Activated CD8-positive, alpha-beta T cell treated with anti-CD3 and anti-CD28 coated beads, Interleukin-2, amount 10 ng/mL, durations not matched to agents 7 days and 5 days (primary cell): ENCODE measurements at regions of chr1 and their contacts with region 1.

Region 1: GRCh38 chr1:45303582-45304310 is 22.9 kb upstream of the HPDL start:
- DNase-seq: peak; percentile 99
- ATAC-seq: peak; percentile 89
- H3K4me3 Mint-ChIP-seq: peak overlapping the region; percentile 89
- H3K27ac Mint-ChIP-seq: peak overlapping the region; percentile 97
- H3K4me1 Mint-ChIP-seq: peaks cover 40% of the 10 kb centered on the region
- H3K27me3 Mint-ChIP-seq: no peaks in the 10 kb centered on the region

Region 2: GRCh38 chr1:45033356-45033755 is 270.4 kb before region 1 on chr1:
- CTCF ChIA-PET with region 1: interaction called, 13 read pairs
- POLR2A ChIA-PET with region 1: interaction called, 3 read pairs
- DNase-seq: no peak
- ATAC-seq: peak; percentile 91
- H3K4me3 Mint-ChIP-seq: no peak overlapping the region
- H3K27ac Mint-ChIP-seq: peak overlapping the region; percentile 83
- H3K4me1 Mint-ChIP-seq: peaks cover 13% of the 10 kb centered on the region
- H3K27me3 Mint-ChIP-seq: no peaks in the 10 kb centered on the region

Region 3: GRCh38 chr1:45141247-45142003 is 162.3 kb before region 1 on chr1:
- CTCF ChIA-PET with region 1: no interaction called
- POLR2A ChIA-PET with region 1: no interaction called
- DNase-seq: no peak
- ATAC-seq: no peak
- H3K4me3 Mint-ChIP-seq: no peak overlapping the region
- H3K27ac Mint-ChIP-seq: no peak overlapping the region
- H3K4me1 Mint-ChIP-seq: no peaks in the 10 kb centered on the region
- H3K27me3 Mint-ChIP-seq: peaks cover 4% of the 10 kb centered on the region

Region 4: GRCh38 chr1:45326627-45327623 is 23.2 kb after region 1 on chr1 and contains the start of gene HPDL:
- CTCF ChIA-PET with region 1: interaction called, 7 read pairs
- POLR2A ChIA-PET with region 1: interaction called, 10 read pairs
- DNase-seq: peak; percentile 82
- ATAC-seq: peak; percentile 90
- H3K4me3 Mint-ChIP-seq: peak within 1 kb of the TSS; percentile 83
- H3K27ac Mint-ChIP-seq: peak within 1 kb of the TSS; percentile 87
- H3K4me1 Mint-ChIP-seq: peaks cover 22% of the 10 kb centered on the region
- H3K27me3 Mint-ChIP-seq: peaks cover 1% of the 10 kb centered on the region
- total RNA-seq, gene HPDL: 16.8 TPM

Region 5: DNA sequence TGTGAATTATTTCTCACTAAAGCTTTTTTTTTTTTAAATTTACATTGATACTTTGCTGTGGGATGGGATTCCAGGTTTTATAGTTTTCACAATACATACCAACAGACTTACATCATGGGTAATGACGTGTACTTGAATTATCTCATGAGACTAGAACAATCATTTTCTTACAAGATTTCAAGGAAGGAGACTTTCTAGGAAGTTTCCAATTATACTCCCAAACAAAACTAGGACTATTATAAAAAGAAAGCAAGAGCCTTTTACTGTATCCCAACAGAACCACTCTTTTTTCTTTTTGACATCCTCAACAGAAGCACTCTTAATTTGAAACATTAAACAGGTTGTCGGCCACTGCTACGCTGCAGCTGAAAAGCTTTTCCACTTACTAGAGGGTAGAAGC is 138.5 kb after region 1 on chr1:
- CTCF ChIA-PET with region 1: no interaction called
- POLR2A ChIA-PET with region 1: no interaction called
- DNase-seq: no peak
- ATAC-seq: no peak
- H3K4me3 Mint-ChIP-seq: no peak overlapping the region
- H3K27ac Mint-ChIP-seq: no peak overlapping the region
- H3K4me1 Mint-ChIP-seq: no peaks in the 10 kb centered on the region
- H3K27me3 Mint-ChIP-seq: no peaks in the 10 kb centered on the region

Region 6: DNA sequence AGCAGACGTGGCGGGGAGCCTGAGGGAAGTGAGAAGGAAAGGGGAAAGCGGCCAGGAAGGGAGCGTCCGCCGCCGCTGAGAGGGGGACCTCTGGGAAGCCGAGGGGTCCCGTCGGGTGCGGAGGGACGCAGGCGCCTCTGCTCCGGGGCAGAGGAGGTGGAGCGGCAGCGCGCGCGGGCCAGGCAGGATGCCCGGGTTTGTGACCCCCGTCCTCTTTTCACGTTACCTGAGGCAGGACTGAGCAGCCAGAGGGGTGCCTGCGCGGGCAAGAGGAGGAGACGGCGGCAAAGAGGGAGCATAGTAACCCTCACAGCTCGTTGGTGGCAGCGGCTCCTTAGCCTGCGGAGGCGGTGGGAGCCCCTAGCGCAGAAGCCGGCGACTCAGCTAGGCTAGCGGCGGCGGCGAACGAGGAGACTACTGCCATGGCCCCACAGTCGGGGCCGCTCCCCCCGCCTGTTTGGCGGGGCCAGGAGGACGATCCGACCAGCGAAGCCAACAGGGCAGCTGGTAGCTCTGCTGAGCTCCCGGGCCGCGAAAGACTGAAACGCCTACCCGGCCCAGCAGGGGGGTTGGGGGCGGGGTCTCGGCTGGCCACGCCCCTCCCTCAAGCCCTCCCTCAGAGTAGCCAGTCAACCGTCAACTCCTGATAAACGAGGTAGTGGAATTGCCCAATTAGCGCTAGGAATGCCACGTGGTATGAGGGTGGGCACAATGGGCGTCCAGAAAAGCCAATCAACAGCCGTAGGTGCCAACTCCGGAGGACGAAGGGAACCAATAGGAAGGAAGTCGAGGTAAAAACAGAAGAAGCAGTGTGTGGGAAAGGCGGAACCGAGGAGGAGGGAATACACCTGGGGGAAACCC is 187.1 kb after region 1 on chr1 and contains the start of gene TESK2:
- CTCF ChIA-PET with region 1: interaction called, 57 read pairs
- POLR2A ChIA-PET with region 1: no interaction called
- DNase-seq: peak; percentile 98
- ATAC-seq: peak; percentile 99
- H3K4me3 Mint-ChIP-seq: no peak within 1 kb of the TSS
- H3K27ac Mint-ChIP-seq: no peak within 1 kb of the TSS
- H3K4me1 Mint-ChIP-seq: peaks cover 12% of the 10 kb centered on the region
- H3K27me3 Mint-ChIP-seq: peaks cover 5% of the 10 kb centered on the region
- total RNA-seq, gene TESK2: 3.3 to 3.5 TPM